Left colon (tissue), 2 donors: ENCODE measurements at regions of chr5 and their contacts with region 1.

Region 1: GRCh38 chr5:155943516-155944407 is 383.2 kb upstream of the SGCD start:
- DNase-seq: peak; percentile 32 to 63
- ATAC-seq: peak; percentile 96

Region 2: GRCh38 chr5:156824800-156825199 is 881.0 kb after region 1 on chr5:
- intact Hi-C with region 1: loop called in 1 of 2 experiments (anchors 5 kb)
- DNase-seq: no peak
- ATAC-seq: no peak